ENCODE measurements at regions of chr20 and their contacts with region 1.

Region 1: GRCh38 chr20:45629496-45630100 is at the start of gene WFDC10A:
- DNase-seq: no peak
- H3K4me3 Mint-ChIP-seq: no peak within 1 kb of the TSS
- H3K27ac Mint-ChIP-seq: no peak within 1 kb of the TSS
- H3K4me1 Mint-ChIP-seq: no peaks in the 10 kb centered on the region
- H3K27me3 Mint-ChIP-seq: peaks cover 12% of the 10 kb centered on the region
- total RNA-seq, gene WFDC10A: not detected in 2 replicates

Region 2: GRCh38 chr20:45592574-45593189 is 36.9 kb before region 1 on chr20:
- intact Hi-C with region 1: loop called (anchors 1 kb)
- DNase-seq: no peak
- H3K4me3 Mint-ChIP-seq: no peak overlapping the region
- H3K27ac Mint-ChIP-seq: no peak overlapping the region
- H3K4me1 Mint-ChIP-seq: no peaks in the 10 kb centered on the region
- H3K27me3 Mint-ChIP-seq: peaks cover 9% of the 10 kb centered on the region

Measured in activated T-helper 1 cell treated with anti-CD3 and anti-CD28 coated beads, Interleukin-12 subunit alpha, Interleukin-12 subunit beta, Interleukin-2, Interleukin-4 antibody, amounts not matched to agents 30 ng/mL and 10 ng/mL and 1 ng/mL, durations not matched to agents 14 hours and 24 hours and 36 hours (primary cell).